Activated T-helper 1 cell treated with anti-CD3 and anti-CD28 coated beads, Interleukin-12 subunit alpha, Interleukin-12 subunit beta, Interleukin-2, Interleukin-4 antibody, amounts not matched to agents 30 ng/mL and 10 ng/mL and 1 ng/mL, durations not matched to agents 14 hours and 24 hours and 36 hours (primary cell): ENCODE measurements at regions of chr19 and their contacts with region 1.

Region 1: GRCh38 chr19:6590827-6591319 is at the start of gene CD70:
- DNase-seq: peak; percentile 70
- H3K4me3 Mint-ChIP-seq: peak within 1 kb of the TSS; percentile 95
- H3K27ac Mint-ChIP-seq: peak within 1 kb of the TSS; percentile 87
- H3K4me1 Mint-ChIP-seq: peaks cover 66% of the 10 kb centered on the region
- H3K27me3 Mint-ChIP-seq: peaks cover 33% of the 10 kb centered on the region
- total RNA-seq, gene CD70: 55.4 and 61.6 TPM in 2 replicates

Region 2: GRCh38 chr19:6530386-6531161 is 60.3 kb before region 1 on chr19 and contains the start of gene TNFSF9:
- intact Hi-C with region 1: loop called (anchors 5 kb)
- DNase-seq: peak; percentile 77
- H3K4me3 Mint-ChIP-seq: peak within 1 kb of the TSS; percentile 90
- H3K27ac Mint-ChIP-seq: peak within 1 kb of the TSS; percentile 83
- H3K4me1 Mint-ChIP-seq: peaks cover 39% of the 10 kb centered on the region
- H3K27me3 Mint-ChIP-seq: peaks cover 32% of the 10 kb centered on the region
- total RNA-seq, gene TNFSF9: 8.0 and 9.7 TPM in 2 replicates

Region 3: GRCh38 chr19:6551607-6552450 is 39.0 kb before region 1 on chr19:
- intact Hi-C with region 1: loop called (anchors 5 kb)
- DNase-seq: peak; percentile 40
- H3K4me3 Mint-ChIP-seq: no peak overlapping the region
- H3K27ac Mint-ChIP-seq: no peak overlapping the region
- H3K4me1 Mint-ChIP-seq: peaks cover 6% of the 10 kb centered on the region
- H3K27me3 Mint-ChIP-seq: peaks cover 8% of the 10 kb centered on the region

Region 4: GRCh38 chr19:6610934-6611852 is 20.3 kb after region 1 on chr19:
- intact Hi-C with region 1: loop called (anchors 1 kb)
- DNase-seq: no peak
- H3K4me3 Mint-ChIP-seq: no peak overlapping the region
- H3K27ac Mint-ChIP-seq: no peak overlapping the region
- H3K4me1 Mint-ChIP-seq: peaks cover 25% of the 10 kb centered on the region
- H3K27me3 Mint-ChIP-seq: peaks cover 27% of the 10 kb centered on the region

Region 5: GRCh38 chr19:6663236-6664201 is 72.6 kb after region 1 on chr19:
- intact Hi-C with region 1: loop called (anchors 5 kb)
- DNase-seq: no peak
- H3K4me3 Mint-ChIP-seq: no peak overlapping the region
- H3K27ac Mint-ChIP-seq: no peak overlapping the region
- H3K4me1 Mint-ChIP-seq: peaks cover 12% of the 10 kb centered on the region
- H3K27me3 Mint-ChIP-seq: no peaks in the 10 kb centered on the region

Region 6: GRCh38 chr19:6906559-6907060 is 315.7 kb after region 1 on chr19:
- intact Hi-C with region 1: no loop called
- DNase-seq: no peak
- H3K4me3 Mint-ChIP-seq: no peak overlapping the region
- H3K27ac Mint-ChIP-seq: no peak overlapping the region
- H3K4me1 Mint-ChIP-seq: no peaks in the 10 kb centered on the region
- H3K27me3 Mint-ChIP-seq: peaks cover 2% of the 10 kb centered on the region